ENCODE measurements at regions of chrX and their contacts with region 1.

Region 1: GRCh38 chrX:79182616-79183015 is 38.1 kb downstream of the GPR174 start:
- DNase-seq: no peak
- H3K4me3 Mint-ChIP-seq: peak overlapping the region; percentile 72
- H3K27ac Mint-ChIP-seq: peak overlapping the region; percentile 81
- H3K4me1 Mint-ChIP-seq: peaks cover 52% of the 10 kb centered on the region
- H3K27me3 Mint-ChIP-seq: no peaks in the 10 kb centered on the region

Region 2: GRCh38 chrX:78658845-78659744 is 523.5 kb before region 1 on chrX and contains the start of gene RTL3:
- intact Hi-C with region 1: loop called (anchors 2 kb)
- DNase-seq: no peak
- H3K4me3 Mint-ChIP-seq: peak within 1 kb of the TSS; percentile 60
- H3K27ac Mint-ChIP-seq: peak within 1 kb of the TSS; percentile 44
- H3K4me1 Mint-ChIP-seq: peaks cover 24% of the 10 kb centered on the region
- H3K27me3 Mint-ChIP-seq: no peaks in the 10 kb centered on the region
- total RNA-seq, gene RTL3: 0.07 TPM in 1 of 2 replicates, not detected in the other

Region 3: DNA sequence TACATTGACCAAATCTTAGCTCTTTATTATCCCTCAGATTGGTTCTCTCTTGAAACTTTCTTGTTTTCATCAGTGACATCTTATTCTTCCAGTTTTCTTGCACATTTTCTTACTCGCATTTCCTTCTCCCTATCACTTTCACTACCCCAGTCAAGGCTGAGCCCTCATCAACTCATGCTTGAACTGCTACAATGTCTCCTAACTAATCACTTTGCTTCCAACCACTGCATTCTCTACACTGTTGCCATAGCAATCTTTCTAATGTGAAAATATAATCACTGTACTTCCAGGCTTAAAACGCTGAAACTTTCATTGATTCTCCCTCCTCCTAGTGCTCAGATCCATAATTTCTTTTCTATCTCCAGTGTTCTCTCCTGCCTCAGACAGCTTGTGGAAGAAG is 457.3 kb before region 1 on chrX:
- intact Hi-C with region 1: no loop called
- DNase-seq: no peak
- H3K4me3 Mint-ChIP-seq: no peak overlapping the region
- H3K27ac Mint-ChIP-seq: no peak overlapping the region
- H3K4me1 Mint-ChIP-seq: no peaks in the 10 kb centered on the region
- H3K27me3 Mint-ChIP-seq: peaks cover 2% of the 10 kb centered on the region

Region 4: DNA sequence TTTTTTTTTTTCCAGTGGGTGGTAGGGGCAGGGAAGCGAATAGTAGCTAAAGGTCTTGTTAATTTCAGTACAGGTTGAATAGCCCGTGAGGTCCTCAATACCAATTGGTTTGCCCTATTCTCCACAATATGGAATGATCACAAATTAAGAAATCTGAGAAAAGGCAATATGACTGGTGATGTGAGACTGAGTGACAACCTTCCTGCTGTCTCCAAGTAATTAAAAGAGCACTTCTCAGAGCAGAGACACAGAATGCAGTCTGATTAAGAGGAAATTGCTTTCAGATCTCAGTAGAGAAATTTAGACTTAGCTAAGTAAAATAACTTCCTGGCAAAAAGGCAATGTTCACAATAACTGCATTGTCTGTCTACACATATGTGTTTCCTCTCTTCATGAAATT is 15.2 kb before region 1 on chrX:
- intact Hi-C with region 1: loop called (anchors 1 kb)
- DNase-seq: no peak
- H3K4me3 Mint-ChIP-seq: peak overlapping the region; percentile 74
- H3K27ac Mint-ChIP-seq: peak overlapping the region; percentile 81
- H3K4me1 Mint-ChIP-seq: peaks cover 70% of the 10 kb centered on the region
- H3K27me3 Mint-ChIP-seq: no peaks in the 10 kb centered on the region

Region 5: DNA sequence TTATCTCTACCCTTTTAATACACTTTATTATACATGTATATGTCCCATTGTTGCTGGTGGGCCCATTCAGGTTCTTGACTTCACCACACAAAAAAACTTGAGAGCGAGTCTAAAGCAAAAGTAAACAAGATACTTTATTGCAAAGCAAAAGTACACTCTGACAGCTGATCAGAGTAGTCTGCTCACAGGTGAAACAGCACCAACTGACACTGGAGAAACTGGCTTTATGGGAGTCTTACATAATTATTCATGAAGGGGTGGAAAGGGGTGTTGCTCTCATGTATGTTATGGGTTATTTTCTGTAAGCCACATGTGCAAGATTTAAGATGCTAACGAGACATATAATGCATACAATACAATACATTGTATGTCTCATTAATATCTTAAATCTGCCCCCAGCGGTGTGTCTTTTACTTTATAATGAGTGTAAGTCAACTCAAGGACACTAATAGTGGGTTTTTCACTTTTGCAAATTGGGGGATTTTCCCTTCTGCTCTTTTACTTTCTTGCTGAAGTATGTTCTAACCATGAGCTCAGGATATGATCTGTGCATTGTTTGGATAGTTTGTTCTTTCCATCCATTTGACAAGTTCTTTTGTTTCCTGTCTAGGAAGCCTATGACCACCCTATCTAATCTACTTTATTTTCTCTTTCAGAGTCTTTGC is 440.6 kb after region 1 on chrX:
- intact Hi-C with region 1: no loop called
- DNase-seq: no peak
- H3K4me3 Mint-ChIP-seq: no peak overlapping the region
- H3K27ac Mint-ChIP-seq: no peak overlapping the region
- H3K4me1 Mint-ChIP-seq: no peaks in the 10 kb centered on the region
- H3K27me3 Mint-ChIP-seq: peaks cover 3% of the 10 kb centered on the region

Measured in activated T-helper 1 cell treated with anti-CD3 and anti-CD28 coated beads, Interleukin-12 subunit alpha, Interleukin-12 subunit beta, Interleukin-2, Interleukin-4 antibody, amounts not matched to agents 30 ng/mL and 10 ng/mL and 1 ng/mL, durations not matched to agents 14 hours and 24 hours and 36 hours (primary cell).